Naive thymus-derived CD4-positive, alpha-beta T cell (primary cell): ENCODE measurements at regions of chr9 and their contacts with region 1.

Region 1: GRCh38 chr9:114894801-114895433 is 35.5 kb downstream of the TNFSF8 start:
- DNase-seq: no peak
- ATAC-seq: peak; percentile 27
- H3K4me3 ChIP-seq: no peak overlapping the region
- H3K4me3 Mint-ChIP-seq: peak overlapping the region in 7 of 10 donors; percentile 11 to 73 (median 34)
- H3K27ac ChIP-seq: no peak overlapping the region
- H3K27ac Mint-ChIP-seq: peak overlapping the region in 7 of 9 donors; percentile 24 to 87 (median 48)
- H3K4me1 ChIP-seq: peaks cover 56 to 73% of the 10 kb centered on the region in 2 donors
- H3K4me1 Mint-ChIP-seq: peaks cover 17 to 54% (median 32%) of the 10 kb centered on the region in 7 donors
- H3K27me3 ChIP-seq: no peaks in the 10 kb centered on the region
- H3K27me3 Mint-ChIP-seq: no peaks in the 10 kb centered on the region

Region 2: GRCh38 chr9:114691046-114691955 is 203.6 kb before region 1 on chr9:
- CTCF ChIA-PET with region 1: no interaction called
- POLR2A ChIA-PET with region 1: no interaction called
- intact Hi-C with region 1: loop called in 1 of 2 experiments (anchors 2 kb)
- DNase-seq: peak in 5 of 9 donors; percentile 4 to 66 (median 6)
- ATAC-seq: peak; percentile 84
- H3K4me3 ChIP-seq: peak overlapping the region; percentile 2
- H3K4me3 Mint-ChIP-seq: peak overlapping the region in 8 of 10 donors; percentile 0 to 66 (median 12)
- H3K27ac ChIP-seq: no peak overlapping the region
- H3K27ac Mint-ChIP-seq: peak overlapping the region in 4 of 9 donors; percentile 64 to 91 (median 80)
- H3K4me1 ChIP-seq: peaks cover 0 to 24% of the 10 kb centered on the region in 2 donors
- H3K4me1 Mint-ChIP-seq: peaks cover 6 to 90% (median 12%) of the 10 kb centered on the region in 7 donors
- H3K27me3 ChIP-seq: no peaks in the 10 kb centered on the region
- H3K27me3 Mint-ChIP-seq: no peaks in the 10 kb centered on the region

Region 3: GRCh38 chr9:114805670-114806525 is 89.0 kb before region 1 on chr9 and contains the start of gene TNFSF15:
- CTCF ChIA-PET with region 1: no interaction called
- POLR2A ChIA-PET with region 1: no interaction called
- intact Hi-C with region 1: loop called in 1 of 2 experiments (anchors 2 kb)
- DNase-seq: peak in 2 of 9 donors; percentile 0 to 49
- ATAC-seq: peak; percentile 67
- H3K4me3 ChIP-seq: no peak within 1 kb of the TSS
- H3K4me3 Mint-ChIP-seq: peak within 1 kb of the TSS; percentile 41 to 79 (median 68)
- H3K27ac ChIP-seq: no peak within 1 kb of the TSS
- H3K27ac Mint-ChIP-seq: peak within 1 kb of the TSS in 7 of 9 donors; percentile 26 to 83 (median 74)
- H3K4me1 ChIP-seq: peaks cover 11 to 17% of the 10 kb centered on the region in 2 donors
- H3K4me1 Mint-ChIP-seq: peaks cover 21 to 43% (median 25%) of the 10 kb centered on the region in 7 donors
- H3K27me3 ChIP-seq: no peaks in the 10 kb centered on the region
- H3K27me3 Mint-ChIP-seq: peaks cover 0 to 30% (median 0%) of the 10 kb centered on the region in 5 donors
- total RNA-seq, gene TNFSF15: 0.44 to 3.8 TPM in 2 of 5 experiments, not detected in the others

Region 4: DNA sequence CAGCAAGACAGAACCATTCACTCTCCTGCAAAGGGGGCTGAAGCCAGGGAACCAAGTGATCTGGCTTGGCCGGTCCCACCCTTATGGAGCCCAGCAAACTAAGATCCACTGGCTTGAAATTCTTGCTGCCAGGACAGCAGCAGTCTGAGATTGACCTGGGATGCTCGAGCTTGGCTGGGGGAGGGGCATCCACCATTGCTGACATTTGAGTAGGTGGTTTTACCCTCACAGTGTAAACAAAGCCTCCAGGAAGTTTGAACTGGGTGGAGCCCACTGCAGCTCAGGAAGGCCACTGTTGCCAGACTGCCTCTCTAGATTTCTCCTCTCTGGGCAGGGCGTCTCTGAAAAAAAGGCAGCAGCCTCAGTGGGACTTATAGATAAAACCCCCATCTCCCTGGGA is 25.1 kb before region 1 on chr9:
- CTCF ChIA-PET with region 1: interaction called, 3 read pairs
- POLR2A ChIA-PET with region 1: interaction called, 6 read pairs
- intact Hi-C with region 1: loop called in 1 of 2 experiments (anchors 2 kb)
- DNase-seq: peak in 6 of 9 donors; percentile 11 to 42 (median 28)
- ATAC-seq: no peak
- H3K4me3 ChIP-seq: peak overlapping the region; percentile 37
- H3K4me3 Mint-ChIP-seq: peak overlapping the region in 9 of 10 donors; percentile 32 to 66 (median 53)
- H3K27ac ChIP-seq: no peak overlapping the region
- H3K27ac Mint-ChIP-seq: peak overlapping the region; percentile 28 to 87 (median 77)
- H3K4me1 ChIP-seq: peaks cover 17 to 18% of the 10 kb centered on the region in 2 donors
- H3K4me1 Mint-ChIP-seq: peaks cover 8 to 34% (median 28%) of the 10 kb centered on the region in 7 donors
- H3K27me3 ChIP-seq: no peaks in the 10 kb centered on the region
- H3K27me3 Mint-ChIP-seq: no peaks in the 10 kb centered on the region